Heart right ventricle (tissue), 16 donors: ENCODE measurements at regions of chr12 and their contacts with region 1.

Region 1: GRCh38 chr12:8949342-8950220 is at the start of gene M6PR:
- DNase-seq: peak; percentile 92 to 95
- ATAC-seq: peak; percentile 94 to 98 (median 96)
- H3K4me3 ChIP-seq: peak within 1 kb of the TSS; percentile 54 to 89 (median 75)
- H3K27ac ChIP-seq: peak within 1 kb of the TSS; percentile 86 to 98 (median 96)
- H3K4me1 ChIP-seq: peaks cover 7 to 46% (median 27%) of the 10 kb centered on the region in 9 donors
- H3K27me3 ChIP-seq: no peaks in the 10 kb centered on the region
- CTCF ChIP-seq: peak in 8 of 9 donors; percentile 26 to 82 (median 62)
- total RNA-seq, gene M6PR: 85.5 to 133 (median 104) TPM

Region 2: DNA sequence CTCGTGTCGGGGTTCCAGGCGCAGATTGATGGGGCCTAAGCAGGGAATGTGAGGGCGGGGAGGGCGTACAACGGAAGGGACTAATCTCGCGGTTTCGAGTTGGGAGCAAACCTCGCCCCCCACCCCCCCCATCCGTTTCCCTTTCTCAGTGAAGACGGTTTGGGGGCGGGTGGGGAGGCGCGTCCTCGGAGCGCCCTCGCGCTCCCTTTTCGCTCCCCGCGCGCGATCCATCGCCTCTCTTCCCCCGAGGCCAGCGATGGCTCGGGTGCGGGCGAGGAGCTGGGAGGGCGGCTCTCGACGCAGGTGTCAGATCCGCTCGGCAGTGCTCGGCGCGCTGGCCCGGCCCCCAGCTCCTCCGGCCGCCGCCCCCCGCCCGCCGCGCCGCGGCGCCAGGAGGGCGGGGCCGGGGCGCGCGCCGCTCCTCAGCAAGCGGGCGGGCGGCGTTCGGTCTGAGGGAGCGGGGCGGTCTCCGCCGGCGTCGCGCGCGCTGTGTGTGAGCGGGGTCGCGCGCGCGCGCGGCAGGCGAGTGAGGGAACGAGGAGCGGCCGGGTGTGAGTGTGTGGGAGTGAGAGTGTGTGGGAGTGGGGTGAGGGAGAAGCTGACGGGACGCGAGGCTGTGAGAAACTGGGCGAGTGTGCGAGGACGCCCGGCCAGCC is 252.0 kb before region 1 on chr12 and contains the start of gene RIMKLB:
- intact Hi-C with region 1: no loop called
- DNase-seq: peak; percentile 84 to 87
- ATAC-seq: peak; percentile 89 to 95 (median 92)
- H3K4me3 ChIP-seq: peak within 1 kb of the TSS; percentile 90 to 99 (median 94)
- H3K27ac ChIP-seq: peak within 1 kb of the TSS; percentile 77 to 97 (median 92)
- H3K4me1 ChIP-seq: peaks cover 3 to 60% (median 35%) of the 10 kb centered on the region in 9 donors
- H3K27me3 ChIP-seq: peaks cover 0 to 6% (median 0%) of the 10 kb centered on the region in 7 donors
- CTCF ChIP-seq: no peak
- total RNA-seq, gene RIMKLB: 10.5 to 16.4 (median 12.6) TPM

Region 3: GRCh38 chr12:8914716-8915526 is 34.7 kb before region 1 on chr12:
- intact Hi-C with region 1: loop called in 4 of 10 experiments (anchors 5 kb)
- DNase-seq: peak; percentile 34 to 41
- ATAC-seq: peak; percentile 48 to 79 (median 64)
- H3K4me3 ChIP-seq: peak overlapping the region; percentile 40 to 88 (median 68)
- H3K27ac ChIP-seq: peak overlapping the region; percentile 36 to 94 (median 84)
- H3K4me1 ChIP-seq: peaks cover 0 to 42% (median 22%) of the 10 kb centered on the region in 9 donors
- H3K27me3 ChIP-seq: no peaks in the 10 kb centered on the region
- CTCF ChIP-seq: no peak

Region 4: DNA sequence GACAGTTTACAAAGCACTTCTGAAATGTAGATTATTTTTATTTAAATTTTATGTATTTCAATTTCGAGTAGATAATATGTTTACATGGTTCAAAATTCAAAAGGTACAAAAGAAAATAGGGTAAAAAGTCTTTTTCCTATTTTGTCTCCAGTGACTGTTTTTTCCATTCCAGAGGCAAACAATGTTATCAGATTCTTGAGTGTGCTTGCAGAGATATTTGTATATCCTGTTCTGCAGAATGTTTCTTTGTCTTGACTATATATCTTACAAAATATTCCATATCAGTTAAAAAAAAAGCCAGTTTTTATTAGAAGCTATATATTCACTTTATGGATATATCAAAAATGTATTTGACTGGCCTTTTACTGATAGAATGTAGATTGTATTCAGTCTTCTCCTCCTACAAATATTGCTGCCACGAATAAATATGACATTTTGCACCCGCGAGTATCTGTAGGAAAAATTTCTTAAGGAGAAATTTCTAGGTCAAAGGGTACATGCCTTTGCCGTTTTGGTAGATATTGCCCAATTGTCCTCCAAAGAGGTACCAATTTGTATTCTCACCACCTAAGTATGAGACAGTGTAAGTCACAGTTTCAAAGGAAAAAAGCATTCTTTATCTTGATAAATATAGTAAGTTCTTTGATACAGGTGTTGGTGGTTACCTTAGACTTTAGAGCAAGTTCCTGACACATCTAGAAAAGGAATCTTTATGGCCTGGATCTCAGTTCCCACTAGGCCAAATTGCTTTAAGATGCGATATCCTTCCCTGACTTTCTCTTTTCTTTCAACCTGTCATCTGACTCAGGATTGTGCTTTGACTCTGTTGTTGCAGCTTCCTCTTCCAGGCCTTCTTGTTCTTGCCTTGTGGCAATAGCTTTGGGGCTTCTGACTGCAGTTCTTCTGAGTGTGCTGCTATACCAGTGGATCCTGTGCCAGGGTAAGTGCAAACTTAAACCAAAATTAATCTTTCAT is 42.1 kb after region 1 on chr12:
- intact Hi-C with region 1: loop called in 1 of 10 experiments (anchors 2 kb)
- DNase-seq: no peak
- ATAC-seq: no peak
- H3K4me3 ChIP-seq: peak overlapping the region in 1 of 10 donors; percentile 32
- H3K27ac ChIP-seq: peak overlapping the region in 6 of 10 donors; percentile 41 to 66 (median 58)
- H3K4me1 ChIP-seq: peaks cover 0 to 62% (median 41%) of the 10 kb centered on the region in 9 donors
- H3K27me3 ChIP-seq: no peaks in the 10 kb centered on the region
- CTCF ChIP-seq: no peak

Region 5: DNA sequence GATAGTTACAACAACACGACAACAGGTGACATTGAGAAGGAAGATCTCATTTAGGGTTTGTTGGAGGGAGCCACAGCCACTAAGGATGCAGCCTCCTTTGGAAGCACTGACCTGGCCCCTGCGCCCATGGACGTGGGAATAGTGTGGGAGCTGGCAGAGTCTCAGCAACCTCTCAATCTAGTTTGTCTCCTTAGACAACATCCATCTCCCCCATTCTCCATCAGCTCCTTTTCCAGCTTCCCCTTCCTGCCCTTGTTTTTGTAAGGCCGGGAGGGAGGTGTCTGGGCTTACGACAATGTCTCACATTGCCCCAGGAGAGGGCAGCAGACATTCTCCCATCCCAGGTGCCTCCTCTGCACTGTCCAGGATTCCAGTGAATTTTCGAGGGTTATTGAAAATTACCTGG is 428.9 kb after region 1 on chr12:
- intact Hi-C with region 1: no loop called
- DNase-seq: no peak
- ATAC-seq: peak in 3 of 8 donors; percentile 53 to 69 (median 60)
- H3K4me3 ChIP-seq: no peak overlapping the region
- H3K27ac ChIP-seq: no peak overlapping the region
- H3K4me1 ChIP-seq: peaks cover 0 to 5% (median 0%) of the 10 kb centered on the region in 9 donors
- H3K27me3 ChIP-seq: peaks cover 0 to 3% (median 0%) of the 10 kb centered on the region in 7 donors
- CTCF ChIP-seq: peak in 6 of 9 donors; percentile 32 to 54 (median 37)